ENCODE measurements at regions of chr1 and their contacts with region 1.

Region 1: DNA sequence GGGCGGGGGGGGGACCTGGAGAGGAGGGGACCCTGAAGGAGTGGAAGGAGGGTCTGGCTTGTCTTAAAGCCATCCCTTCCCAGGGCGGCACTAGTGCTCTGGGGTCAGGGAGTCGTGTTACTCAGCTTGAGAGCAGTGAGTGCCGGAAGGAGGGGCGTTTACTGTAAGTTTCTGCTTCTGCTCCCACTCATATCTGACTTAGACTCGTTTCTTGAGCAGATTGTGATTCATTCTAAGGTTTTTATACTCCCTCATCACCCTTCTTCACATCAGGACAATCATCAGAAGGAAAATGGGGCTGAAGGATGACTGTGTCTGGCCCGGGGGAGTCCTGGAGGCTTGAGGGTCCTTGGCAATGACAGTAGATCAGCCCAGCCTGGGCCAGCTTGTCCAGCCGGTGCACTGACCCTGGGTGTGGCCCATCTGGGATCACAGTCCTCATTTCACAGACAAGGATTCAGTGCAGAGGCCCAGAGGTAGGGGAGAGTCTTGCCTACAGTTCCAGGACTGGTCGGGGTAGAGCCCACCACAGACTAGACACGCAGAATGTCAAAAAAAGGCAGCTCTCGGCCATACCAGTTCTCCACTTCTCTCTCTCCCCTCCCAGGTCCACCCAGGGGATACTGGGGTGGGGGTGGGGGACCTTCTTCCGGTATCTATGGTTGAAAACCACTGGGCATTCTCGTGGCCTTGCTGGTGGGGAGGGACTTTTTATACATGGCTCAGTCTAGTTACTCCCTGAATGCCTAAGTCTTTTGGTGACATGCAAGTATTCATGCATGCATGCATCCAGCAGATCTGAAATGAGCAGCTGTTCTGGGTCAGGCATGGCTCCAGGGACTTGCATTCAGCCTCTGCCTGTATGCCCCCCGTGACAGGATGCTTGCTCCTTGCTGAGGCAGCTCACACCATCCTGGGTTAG is 5.1 kb downstream of the TNFRSF8 start:
- DNase-seq: peak; percentile 47
- H3K4me3 Mint-ChIP-seq: peak overlapping the region; percentile 73
- H3K27ac Mint-ChIP-seq: peak overlapping the region; percentile 94
- H3K4me1 Mint-ChIP-seq: peaks cover 68% of the 10 kb centered on the region
- H3K27me3 Mint-ChIP-seq: peaks cover 2% of the 10 kb centered on the region

Region 2: DNA sequence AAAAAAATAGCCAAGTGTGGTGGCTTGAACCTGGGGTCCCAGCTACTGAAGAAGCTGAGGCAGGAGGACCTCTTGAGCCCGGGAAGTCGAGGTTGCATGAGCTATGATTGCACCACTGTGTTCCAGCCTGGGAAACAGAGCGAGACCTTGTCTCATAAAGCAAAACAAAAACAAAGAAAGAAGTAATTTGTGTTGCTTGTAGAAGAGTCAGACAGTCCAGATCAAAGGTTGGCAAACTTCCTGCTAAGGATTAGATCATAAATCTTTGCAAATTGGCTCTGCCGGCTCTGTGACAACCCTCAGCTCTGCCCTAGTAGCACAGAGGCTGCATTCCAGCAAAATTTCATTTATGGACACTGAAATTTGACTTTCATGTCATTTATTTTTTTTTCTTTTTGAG is 106.9 kb before region 1 on chr1:
- intact Hi-C with region 1: no loop called
- DNase-seq: no peak
- H3K4me3 Mint-ChIP-seq: no peak overlapping the region
- H3K27ac Mint-ChIP-seq: no peak overlapping the region
- H3K4me1 Mint-ChIP-seq: no peaks in the 10 kb centered on the region
- H3K27me3 Mint-ChIP-seq: no peaks in the 10 kb centered on the region

Region 3: DNA sequence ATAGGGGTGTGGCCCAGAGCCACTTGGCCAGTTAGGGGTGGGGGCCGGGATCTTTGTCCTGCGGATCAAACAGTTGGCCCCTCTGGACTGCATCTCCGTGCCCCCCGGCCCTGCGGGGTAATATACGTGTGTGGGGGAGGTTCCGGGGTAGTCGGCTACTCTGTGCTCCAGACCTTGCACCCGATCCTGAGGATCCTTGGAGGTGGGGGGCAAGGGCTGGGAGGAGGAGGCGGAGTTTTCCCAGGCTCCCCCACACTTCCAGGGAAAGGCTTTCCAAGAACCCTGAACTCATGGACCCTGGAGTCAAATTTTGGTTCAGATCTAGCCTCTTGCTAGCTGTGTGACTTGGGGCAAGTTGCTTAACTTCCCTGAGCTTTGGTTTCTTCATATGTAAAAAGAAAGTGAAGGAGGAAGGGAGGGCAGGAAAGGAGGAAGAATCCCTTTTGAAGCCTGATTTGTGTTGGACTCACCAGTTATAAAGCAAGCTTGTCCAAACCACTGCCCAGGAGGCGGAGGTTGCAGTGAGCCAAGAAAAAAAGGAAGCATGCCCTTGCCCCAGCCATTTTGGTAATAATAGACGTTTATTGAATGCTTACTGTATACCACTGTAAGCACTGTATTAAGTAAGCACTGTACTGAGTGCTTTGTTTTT is 48.2 kb before region 1 on chr1:
- intact Hi-C with region 1: loop called (anchors 1 kb)
- DNase-seq: no peak
- H3K4me3 Mint-ChIP-seq: peak overlapping the region; percentile 82
- H3K27ac Mint-ChIP-seq: peak overlapping the region; percentile 55
- H3K4me1 Mint-ChIP-seq: peaks cover 23% of the 10 kb centered on the region
- H3K27me3 Mint-ChIP-seq: no peaks in the 10 kb centered on the region

Region 4: GRCh38 chr1:12040457-12041051 is 27.6 kb before region 1 on chr1:
- intact Hi-C with region 1: loop called (anchors 1 kb)
- DNase-seq: no peak
- H3K4me3 Mint-ChIP-seq: no peak overlapping the region
- H3K27ac Mint-ChIP-seq: peak overlapping the region; percentile 29
- H3K4me1 Mint-ChIP-seq: peaks cover 48% of the 10 kb centered on the region
- H3K27me3 Mint-ChIP-seq: no peaks in the 10 kb centered on the region

Region 5: GRCh38 chr1:12047120-12047876 is 20.9 kb before region 1 on chr1:
- intact Hi-C with region 1: loop called (anchors 1 kb)
- DNase-seq: peak; percentile 71
- H3K4me3 Mint-ChIP-seq: no peak overlapping the region
- H3K27ac Mint-ChIP-seq: no peak overlapping the region
- H3K4me1 Mint-ChIP-seq: peaks cover 18% of the 10 kb centered on the region
- H3K27me3 Mint-ChIP-seq: no peaks in the 10 kb centered on the region

Region 6: DNA sequence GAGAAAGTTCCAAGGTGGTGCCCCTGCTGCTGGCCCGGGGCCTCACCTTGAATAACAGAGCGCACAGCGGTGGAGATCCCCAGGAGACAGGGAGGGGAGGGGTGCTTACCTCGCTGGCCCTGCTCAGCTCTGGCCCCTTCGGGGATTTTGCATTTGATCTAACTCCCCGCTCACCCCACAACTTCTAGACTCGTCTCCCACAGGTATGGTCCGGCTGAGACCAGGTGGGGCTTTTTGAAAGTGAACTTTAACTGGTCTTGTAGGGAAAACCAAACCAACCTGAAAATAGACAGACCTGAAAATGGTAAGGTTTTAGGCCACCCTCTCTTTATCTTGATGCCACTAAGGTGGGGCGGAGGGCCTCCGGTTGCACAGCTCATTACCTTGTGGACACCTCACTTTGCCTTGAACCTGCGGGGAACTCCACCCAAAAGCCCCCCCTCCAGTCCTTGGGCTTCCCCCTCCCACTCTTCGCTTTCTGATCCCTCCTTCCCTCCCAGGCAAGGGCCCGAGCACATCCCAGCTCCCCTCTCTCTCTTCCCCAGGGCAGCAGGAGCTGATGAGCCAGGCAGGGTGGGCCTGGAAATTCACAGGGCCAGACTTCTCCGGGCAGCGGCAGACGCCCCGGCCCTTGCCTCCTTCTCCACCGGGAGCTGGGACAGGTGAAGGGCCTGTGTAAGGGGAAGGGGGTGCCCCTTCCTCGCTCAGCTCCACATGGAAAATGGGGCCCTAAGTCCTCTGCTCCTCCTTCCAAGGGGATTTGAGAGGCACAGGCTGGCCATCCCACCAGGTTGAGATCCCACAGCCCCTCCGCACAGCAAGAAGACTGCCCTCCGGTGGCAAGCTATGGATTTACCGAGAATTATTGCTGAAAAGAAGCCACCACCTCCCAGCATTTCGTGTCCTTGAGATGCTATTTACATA is 11.0 kb after region 1 on chr1:
- intact Hi-C with region 1: loop called (anchors 1 kb)
- DNase-seq: no peak
- H3K4me3 Mint-ChIP-seq: no peak overlapping the region
- H3K27ac Mint-ChIP-seq: peak overlapping the region; percentile 70
- H3K4me1 Mint-ChIP-seq: peaks cover 57% of the 10 kb centered on the region
- H3K27me3 Mint-ChIP-seq: peaks cover 3% of the 10 kb centered on the region

Region 7: DNA sequence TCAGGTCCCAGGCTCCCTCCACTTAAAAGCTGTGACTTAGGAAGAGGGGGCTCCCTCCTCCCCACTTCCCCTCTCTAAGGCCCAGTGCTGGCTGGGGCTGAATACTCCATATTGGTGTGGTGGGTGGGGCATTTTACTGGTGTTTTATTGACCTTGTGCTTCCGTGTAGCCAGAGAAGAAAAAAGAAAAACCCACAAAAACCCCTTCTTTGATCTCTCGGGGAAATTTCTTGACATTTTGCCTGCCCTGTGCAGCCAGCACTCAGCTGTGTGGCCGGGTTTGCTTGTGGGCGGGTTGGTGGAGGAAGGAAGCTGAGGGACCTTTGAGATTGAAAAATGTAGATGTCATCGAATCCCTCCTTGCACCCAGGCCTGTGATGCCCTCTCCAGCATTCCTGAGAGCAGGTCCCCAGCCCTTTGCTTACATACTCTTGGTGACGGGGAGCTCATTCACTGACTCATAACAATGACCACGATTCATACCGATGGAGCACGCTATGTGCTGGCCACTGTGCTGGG is 19.7 kb after region 1 on chr1:
- intact Hi-C with region 1: loop called (anchors 1 kb)
- DNase-seq: peak; percentile 66
- H3K4me3 Mint-ChIP-seq: peak overlapping the region; percentile 51
- H3K27ac Mint-ChIP-seq: peak overlapping the region; percentile 95
- H3K4me1 Mint-ChIP-seq: peaks cover 58% of the 10 kb centered on the region
- H3K27me3 Mint-ChIP-seq: no peaks in the 10 kb centered on the region

Region 8: DNA sequence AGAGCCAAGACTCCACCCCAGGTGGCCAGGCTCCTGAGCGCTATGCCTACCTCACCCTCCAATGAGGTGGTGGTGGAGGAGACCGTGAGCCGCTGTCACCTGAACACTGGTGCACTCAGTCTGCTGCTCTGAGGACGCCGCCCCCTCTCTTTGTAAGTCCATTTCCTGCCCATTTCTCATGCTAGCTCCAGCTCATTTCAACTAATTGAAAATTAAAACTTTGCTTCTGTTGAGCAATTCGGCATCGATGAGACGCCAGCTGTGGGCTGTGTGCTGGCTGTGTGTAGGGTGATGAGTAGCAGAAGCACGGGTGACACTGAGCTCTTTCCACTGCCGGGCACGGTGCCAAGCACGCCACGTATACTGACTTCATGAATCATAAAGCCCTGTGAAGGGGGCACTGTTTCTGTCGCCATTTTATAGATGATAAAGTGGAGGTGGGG is 109.9 kb after region 1 on chr1:
- intact Hi-C with region 1: loop called (anchors 1 kb)
- DNase-seq: peak; percentile 62
- H3K4me3 Mint-ChIP-seq: peak overlapping the region; percentile 79
- H3K27ac Mint-ChIP-seq: peak overlapping the region; percentile 96
- H3K4me1 Mint-ChIP-seq: peaks cover 84% of the 10 kb centered on the region
- H3K27me3 Mint-ChIP-seq: no peaks in the 10 kb centered on the region

Measured in activated T-helper 1 cell treated with anti-CD3 and anti-CD28 coated beads, Interleukin-12 subunit alpha, Interleukin-12 subunit beta, Interleukin-2, Interleukin-4 antibody, amounts not matched to agents 30 ng/mL and 10 ng/mL and 1 ng/mL, durations not matched to agents 14 hours and 24 hours and 36 hours (primary cell).